Heart left ventricle (tissue), 16 donors: ENCODE measurements at regions of chr7 and their contacts with region 1.

Region 1: GRCh38 chr7:29921404-29922010 is 68.1 kb downstream of the SCRN1 start:
- DNase-seq: peak in 3 of 5 donors; percentile 35 to 43 (median 42)
- ATAC-seq: peak; percentile 62 to 89 (median 84)
- H3K4me3 ChIP-seq: no peak overlapping the region
- H3K27ac ChIP-seq: no peak overlapping the region
- H3K4me1 ChIP-seq: peaks cover 0 to 6% (median 0%) of the 10 kb centered on the region in 12 donors
- H3K27me3 ChIP-seq: no peaks in the 10 kb centered on the region
- CTCF ChIP-seq: peak; percentile 82 to 94 (median 88)
- POLR2A ChIP-seq: no peak

Region 2: DNA sequence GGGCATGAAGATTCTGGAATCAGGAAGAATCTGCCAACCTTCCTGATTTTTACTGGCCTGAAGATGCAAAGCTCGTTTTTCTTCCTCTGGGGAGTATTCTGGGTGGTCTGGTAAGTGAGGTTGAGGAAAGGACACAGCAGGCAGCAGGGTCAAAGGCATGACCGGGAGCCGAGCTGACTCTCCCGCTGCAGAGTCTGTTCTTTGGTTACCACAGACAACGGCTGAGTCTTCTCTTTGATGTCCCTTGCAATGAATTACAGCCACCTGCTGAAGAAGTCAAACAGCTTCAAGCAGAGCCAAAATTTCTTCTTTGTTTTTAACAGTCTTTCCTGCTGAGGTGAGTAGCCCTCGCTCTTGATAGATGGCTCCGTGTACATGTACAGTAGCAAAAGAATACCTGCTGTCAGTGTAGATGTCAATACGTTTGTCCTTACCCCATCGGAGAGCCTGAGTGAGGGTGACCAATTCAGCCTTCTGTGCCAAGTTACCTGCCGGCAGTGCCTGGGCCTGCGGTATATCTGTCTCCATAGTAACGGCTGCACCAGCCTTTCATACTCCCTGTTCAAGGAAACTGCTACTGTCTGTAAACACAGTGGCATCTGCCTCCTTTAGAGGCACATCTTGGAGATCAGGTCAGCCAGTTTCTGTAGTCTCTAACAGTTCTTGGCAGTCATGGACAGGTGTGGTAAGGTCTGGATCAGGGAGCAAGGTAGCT is 281.5 kb before region 1 on chr7:
- intact Hi-C with region 1: loop called in 8 of 10 experiments (anchors 2 to 5 kb)
- DNase-seq: no peak
- ATAC-seq: no peak
- H3K4me3 ChIP-seq: no peak overlapping the region
- H3K27ac ChIP-seq: no peak overlapping the region
- H3K4me1 ChIP-seq: no peaks in the 10 kb centered on the region
- H3K27me3 ChIP-seq: no peaks in the 10 kb centered on the region
- CTCF ChIP-seq: no peak
- POLR2A ChIP-seq: no peak

Region 3: DNA sequence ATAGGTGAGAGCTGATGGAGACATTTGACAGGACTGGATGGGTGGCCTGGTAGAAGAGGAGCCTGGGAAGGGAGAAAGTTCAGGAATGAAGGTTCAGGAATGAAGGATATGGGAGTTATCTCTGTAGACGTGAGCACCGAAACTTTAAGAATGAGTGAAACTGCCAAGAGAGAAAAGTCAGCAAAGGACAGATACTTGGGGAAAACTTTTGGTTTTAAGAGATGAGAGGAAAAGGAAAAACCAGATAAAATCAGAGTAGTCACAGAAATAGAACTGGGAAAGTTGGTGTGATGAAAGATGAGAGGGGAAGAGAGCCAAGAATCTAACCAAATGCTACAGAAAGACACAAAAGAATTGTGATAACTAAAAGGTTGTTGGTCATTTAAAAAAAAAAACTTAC is 269.0 kb before region 1 on chr7:
- intact Hi-C with region 1: loop called in 1 of 10 experiments (anchors 10 kb)
- DNase-seq: no peak
- ATAC-seq: no peak
- H3K4me3 ChIP-seq: no peak overlapping the region
- H3K27ac ChIP-seq: no peak overlapping the region
- H3K4me1 ChIP-seq: peaks cover 0 to 23% (median 1%) of the 10 kb centered on the region in 12 donors
- H3K27me3 ChIP-seq: no peaks in the 10 kb centered on the region
- CTCF ChIP-seq: no peak
- POLR2A ChIP-seq: no peak

Region 4: GRCh38 chr7:29806208-29806994 is 115.1 kb before region 1 on chr7 and contains the start of gene WIPF3:
- intact Hi-C with region 1: loop called in 1 of 10 experiments (anchors 10 kb)
- DNase-seq: peak; percentile 30 to 71 (median 50)
- ATAC-seq: peak; percentile 25 to 82 (median 75)
- H3K4me3 ChIP-seq: peak within 1 kb of the TSS; percentile 57 to 81 (median 65)
- H3K27ac ChIP-seq: peak within 1 kb of the TSS in 11 of 12 donors; percentile 27 to 87 (median 69)
- H3K4me1 ChIP-seq: peaks cover 0 to 20% (median 6%) of the 10 kb centered on the region in 12 donors
- H3K27me3 ChIP-seq: peaks cover 0 to 49% (median 0%) of the 10 kb centered on the region in 9 donors
- CTCF ChIP-seq: peak in 4 of 12 donors; percentile 4 to 22 (median 9)
- POLR2A ChIP-seq: no peak
- total RNA-seq, gene WIPF3: 2.6 to 16.5 (median 6.8) TPM

Region 5: DNA sequence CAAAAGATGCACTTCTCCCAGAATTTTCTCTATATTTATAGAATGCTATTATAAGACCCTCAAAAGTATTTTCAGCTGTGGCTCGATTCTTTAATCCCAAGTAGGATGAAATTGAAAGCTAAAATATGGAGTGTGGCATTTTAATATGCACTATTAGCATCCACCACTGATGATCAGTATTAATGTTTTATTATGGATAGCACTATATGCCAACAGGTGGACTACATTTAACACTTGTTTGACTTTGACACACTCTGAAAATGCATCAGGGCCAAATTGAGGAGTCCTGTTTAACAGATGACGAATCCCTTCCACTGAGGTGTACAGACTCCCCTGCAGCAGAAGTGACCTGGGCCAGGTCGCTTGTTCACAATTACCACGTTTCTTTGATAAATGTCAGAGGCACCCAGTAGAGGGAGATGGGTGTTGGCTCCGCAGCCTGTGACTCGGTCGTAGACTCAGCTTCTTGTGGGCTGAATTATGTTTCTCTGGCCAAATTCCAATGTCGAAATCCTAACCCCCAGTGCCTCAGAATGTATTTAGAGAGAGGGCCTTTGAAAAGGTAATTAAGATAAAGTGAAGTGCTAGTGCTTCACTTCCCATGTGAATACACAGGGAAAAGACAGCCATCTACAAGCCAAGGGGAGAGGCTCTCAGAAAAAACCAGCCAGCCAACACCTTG is 67.1 kb before region 1 on chr7:
- intact Hi-C with region 1: no loop called
- DNase-seq: no peak
- ATAC-seq: no peak
- H3K4me3 ChIP-seq: no peak overlapping the region
- H3K27ac ChIP-seq: no peak overlapping the region
- H3K4me1 ChIP-seq: peaks cover 0 to 19% (median 13%) of the 10 kb centered on the region in 12 donors
- H3K27me3 ChIP-seq: no peaks in the 10 kb centered on the region
- CTCF ChIP-seq: no peak
- POLR2A ChIP-seq: no peak

Region 6: GRCh38 chr7:29871787-29872396 is 49.6 kb before region 1 on chr7:
- intact Hi-C with region 1: loop called in 1 of 10 experiments (anchors 5 kb)
- DNase-seq: no peak
- ATAC-seq: no peak
- H3K4me3 ChIP-seq: no peak overlapping the region
- H3K27ac ChIP-seq: no peak overlapping the region
- H3K4me1 ChIP-seq: peaks cover 0 to 3% (median 2%) of the 10 kb centered on the region in 12 donors
- H3K27me3 ChIP-seq: no peaks in the 10 kb centered on the region
- CTCF ChIP-seq: no peak
- POLR2A ChIP-seq: no peak

Region 7: GRCh38 chr7:29968683-29969395 is 47.3 kb after region 1 on chr7:
- intact Hi-C with region 1: no loop called
- DNase-seq: no peak
- ATAC-seq: no peak
- H3K4me3 ChIP-seq: no peak overlapping the region
- H3K27ac ChIP-seq: no peak overlapping the region
- H3K4me1 ChIP-seq: peaks cover 0 to 25% (median 0%) of the 10 kb centered on the region in 12 donors
- H3K27me3 ChIP-seq: no peaks in the 10 kb centered on the region
- CTCF ChIP-seq: no peak
- POLR2A ChIP-seq: no peak

Region 8: DNA sequence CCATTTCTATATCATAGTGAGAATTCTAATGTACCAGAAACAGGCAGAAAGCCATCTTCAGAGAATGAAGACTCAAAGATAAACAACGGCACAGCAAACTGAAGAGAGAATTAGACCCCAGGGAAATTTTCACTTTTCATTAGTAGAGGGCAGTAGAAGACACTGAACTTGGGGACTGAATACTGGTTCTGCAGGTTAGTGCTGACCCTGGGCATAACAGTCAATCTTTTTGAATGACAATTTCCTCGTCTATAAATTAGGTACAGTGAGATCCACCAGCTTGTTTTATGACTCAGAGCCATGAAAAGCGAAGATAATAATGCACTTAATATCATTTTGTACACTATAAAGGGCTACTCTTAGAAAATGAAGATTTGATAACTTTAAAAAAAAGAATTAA is 91.2 kb after region 1 on chr7:
- intact Hi-C with region 1: no loop called
- DNase-seq: no peak
- ATAC-seq: no peak
- H3K4me3 ChIP-seq: no peak overlapping the region
- H3K27ac ChIP-seq: no peak overlapping the region
- H3K4me1 ChIP-seq: no peaks in the 10 kb centered on the region
- H3K27me3 ChIP-seq: no peaks in the 10 kb centered on the region
- CTCF ChIP-seq: no peak
- POLR2A ChIP-seq: no peak